ENCODE measurements at regions of chr17 and their contacts with region 1.

Region 1: DNA sequence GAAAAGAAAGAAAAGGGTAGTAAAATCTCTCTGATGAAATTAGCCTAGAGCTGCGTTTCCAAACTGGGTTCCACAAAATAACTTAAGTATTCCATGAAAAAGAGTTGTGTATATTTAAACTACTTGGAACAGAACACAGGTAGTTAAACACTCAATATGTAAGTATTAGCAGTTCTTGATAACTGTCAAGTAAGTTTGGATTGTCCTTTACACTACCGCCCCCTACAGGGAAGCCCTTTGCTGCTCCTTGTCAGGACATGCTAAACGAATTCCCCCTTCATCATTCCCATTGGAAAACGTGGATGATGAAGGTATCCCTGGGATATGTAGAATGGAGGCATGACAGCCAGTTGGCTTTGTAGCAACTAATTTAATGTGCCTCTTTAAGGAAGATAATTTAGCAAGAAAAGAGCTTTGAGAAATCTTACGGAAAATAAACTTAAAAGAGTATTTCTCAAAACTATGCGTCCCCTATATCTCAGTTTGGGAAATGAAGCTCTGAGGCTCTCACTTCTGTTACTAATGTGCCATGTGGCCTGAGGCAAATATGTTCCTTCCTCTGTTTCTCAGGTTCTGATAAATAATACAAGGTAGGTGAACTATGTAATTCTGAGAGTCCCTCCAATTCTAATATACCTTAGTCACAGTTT is 18.8 kb downstream of the NCBP3 start:
- DNase-seq: no peak
- H3K4me3 ChIP-seq: no peak overlapping the region
- CTCF ChIP-seq: peak; percentile 66

Region 2: GRCh38 chr17:3704931-3705717 is 122.1 kb before region 1 on chr17:
- CTCF ChIA-PET with region 1: no interaction called
- POLR2A ChIA-PET with region 1: no interaction called
- DNase-seq: no peak
- H3K4me3 ChIP-seq: no peak overlapping the region
- CTCF ChIP-seq: no peak

Region 3: DNA sequence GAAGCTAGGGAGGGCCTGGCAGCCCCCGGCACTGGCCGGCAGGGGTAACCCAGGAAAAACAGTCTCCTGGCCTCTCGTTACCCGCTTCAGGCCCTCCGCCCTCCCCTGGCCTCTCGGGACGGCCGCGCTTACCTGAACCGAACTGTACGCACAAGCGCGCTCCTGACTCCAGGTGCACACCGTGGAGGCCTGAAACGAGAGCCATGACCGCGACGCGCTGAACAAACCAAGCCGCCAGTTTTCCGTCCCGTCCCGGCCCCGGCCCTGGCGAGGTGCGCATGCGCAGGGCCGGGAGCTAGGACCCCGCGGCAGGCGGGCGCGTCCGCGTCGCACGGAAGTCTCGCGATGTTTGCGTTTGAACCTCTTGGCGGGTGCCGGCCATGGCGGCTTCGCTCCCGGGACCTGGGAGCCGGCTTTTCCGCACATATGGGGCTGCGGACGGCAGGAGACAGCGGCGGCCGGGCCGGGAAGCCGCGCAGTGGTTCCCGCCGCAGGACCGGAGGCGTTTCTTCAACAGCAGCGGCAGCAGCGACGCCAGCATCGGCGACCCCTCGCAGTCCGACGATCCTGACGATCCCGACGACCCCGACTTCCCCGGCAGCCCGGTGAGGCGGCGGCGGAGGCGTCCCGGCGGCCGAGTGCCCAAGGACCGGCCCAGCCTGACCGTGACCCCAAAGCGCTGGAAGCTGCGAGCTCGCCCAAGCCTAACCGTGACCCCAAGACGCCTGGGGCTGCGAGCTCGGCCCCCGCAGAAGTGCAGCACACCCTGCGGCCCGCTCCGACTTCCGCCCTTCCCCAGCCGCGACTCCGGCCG is 103.5 kb before region 1 on chr17 and contains the start of gene HASPIN:
- CTCF ChIA-PET with region 1: interaction called, 500 read pairs
- POLR2A ChIA-PET with region 1: no interaction called
- DNase-seq: no peak
- H3K4me3 ChIP-seq: peak within 1 kb of the TSS; percentile 87
- CTCF ChIP-seq: peak; percentile 42

Region 4: DNA sequence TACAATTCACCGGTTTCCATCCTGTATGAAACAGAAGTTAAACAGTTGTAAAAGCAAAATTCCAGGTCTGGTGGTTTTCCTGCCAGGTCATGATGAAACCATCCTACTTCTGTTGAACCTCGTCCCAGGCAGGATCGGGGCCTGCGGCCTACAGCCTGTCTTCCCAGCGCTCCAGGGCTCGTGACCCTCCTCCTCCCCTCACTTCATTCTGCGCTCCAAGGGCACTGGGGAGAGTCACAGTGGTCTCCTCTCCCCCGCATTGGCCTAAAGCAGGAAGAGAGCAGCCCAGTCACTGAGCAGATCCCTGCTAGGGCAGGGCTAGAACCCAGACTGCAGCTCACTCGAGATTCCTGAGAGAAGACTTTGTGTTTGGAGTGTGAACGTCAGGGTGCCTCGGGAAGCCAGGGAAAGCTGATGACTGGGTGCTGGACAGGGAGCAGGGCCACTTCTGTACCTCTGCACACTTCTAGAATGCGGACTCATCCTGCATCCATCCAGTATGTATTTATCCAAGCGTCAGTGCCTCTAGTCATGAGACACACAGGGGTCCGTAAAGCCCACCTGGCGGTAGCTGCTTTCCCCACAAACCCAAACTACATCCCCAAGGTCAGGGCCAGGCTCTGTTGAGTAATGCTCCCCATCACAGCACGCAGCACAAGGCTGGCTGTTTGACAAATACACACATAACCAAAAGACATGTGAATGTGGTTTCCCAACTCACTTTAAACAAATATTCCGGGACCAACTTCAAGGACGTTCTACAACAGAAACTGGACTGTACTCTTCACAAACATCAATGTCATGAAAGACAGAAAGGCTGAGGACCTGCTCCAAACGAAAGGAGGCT is 24.6 kb before region 1 on chr17:
- CTCF ChIA-PET with region 1: interaction called, 76 read pairs
- POLR2A ChIA-PET with region 1: no interaction called
- DNase-seq: peak; percentile 62
- H3K4me3 ChIP-seq: no peak overlapping the region
- CTCF ChIP-seq: no peak

Region 5: GRCh38 chr17:3815925-3816324 is 11.3 kb before region 1 on chr17:
- CTCF ChIA-PET with region 1: interaction called, 76 read pairs
- POLR2A ChIA-PET with region 1: no interaction called
- DNase-seq: no peak
- H3K4me3 ChIP-seq: no peak overlapping the region
- CTCF ChIP-seq: no peak

Region 6: GRCh38 chr17:3865176-3865575 is 37.9 kb after region 1 on chr17:
- CTCF ChIA-PET with region 1: interaction called, 16 read pairs
- POLR2A ChIA-PET with region 1: no interaction called
- DNase-seq: no peak
- H3K4me3 ChIP-seq: no peak overlapping the region
- CTCF ChIP-seq: no peak

Region 7: DNA sequence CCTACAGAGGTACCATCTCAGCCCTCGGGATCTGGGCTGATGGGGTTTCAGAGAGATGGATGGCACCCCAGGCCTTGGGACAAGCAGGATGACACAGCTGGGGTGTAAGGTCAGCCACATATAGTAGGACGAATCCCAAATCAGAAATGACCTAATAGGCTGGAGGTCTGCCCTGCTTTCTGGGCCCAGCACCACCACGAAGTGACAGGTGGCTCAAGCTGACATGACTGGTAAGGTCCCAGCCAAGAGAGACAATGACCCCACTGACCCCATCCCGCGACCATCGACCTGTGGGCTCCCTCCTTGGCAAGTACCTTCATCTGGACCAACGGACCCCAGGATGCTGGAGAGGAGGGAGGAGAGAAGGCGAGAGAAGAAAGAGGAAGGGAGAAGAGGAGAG is 50.0 kb after region 1 on chr17:
- CTCF ChIA-PET with region 1: no interaction called
- POLR2A ChIA-PET with region 1: no interaction called
- DNase-seq: no peak
- H3K4me3 ChIP-seq: no peak overlapping the region
- CTCF ChIP-seq: no peak

Region 8: DNA sequence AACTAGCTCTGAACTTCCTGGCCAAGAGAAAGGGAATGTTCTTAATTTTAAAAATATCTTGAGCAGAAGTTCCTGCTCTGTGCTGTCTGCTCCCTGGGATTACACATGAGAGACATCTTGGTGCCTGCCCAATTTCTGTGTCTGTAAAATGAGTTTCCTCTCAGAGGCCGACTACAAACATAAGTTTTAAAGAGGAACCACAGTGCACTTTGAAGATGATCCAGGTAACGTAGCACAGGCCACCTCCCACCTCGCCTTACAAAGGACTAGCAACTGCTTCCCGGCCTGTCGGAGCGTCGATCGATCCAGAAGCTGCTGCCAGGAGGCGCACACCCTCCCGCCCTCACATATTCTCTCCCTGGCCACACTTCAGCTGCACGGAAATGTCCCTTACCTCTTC is 192.0 kb after region 1 on chr17:
- CTCF ChIA-PET with region 1: no interaction called
- POLR2A ChIA-PET with region 1: no interaction called
- DNase-seq: no peak
- H3K4me3 ChIP-seq: no peak overlapping the region
- CTCF ChIP-seq: no peak

Measured in AG04449 (cell line).